ENCODE measurements at regions of chr3 and their contacts with region 1.

Region 1: GRCh38 chr3:58630076-58630709 is 36.4 kb downstream of the FAM3D start:
- DNase-seq: peak; percentile 88
- ATAC-seq: peak; percentile 89
- H3K4me3 Mint-ChIP-seq: no peak overlapping the region
- H3K27ac Mint-ChIP-seq: no peak overlapping the region
- H3K4me1 Mint-ChIP-seq: no peaks in the 10 kb centered on the region
- H3K27me3 Mint-ChIP-seq: peaks cover 28% of the 10 kb centered on the region
- CTCF ChIP-seq: peak; percentile 98

Region 2: DNA sequence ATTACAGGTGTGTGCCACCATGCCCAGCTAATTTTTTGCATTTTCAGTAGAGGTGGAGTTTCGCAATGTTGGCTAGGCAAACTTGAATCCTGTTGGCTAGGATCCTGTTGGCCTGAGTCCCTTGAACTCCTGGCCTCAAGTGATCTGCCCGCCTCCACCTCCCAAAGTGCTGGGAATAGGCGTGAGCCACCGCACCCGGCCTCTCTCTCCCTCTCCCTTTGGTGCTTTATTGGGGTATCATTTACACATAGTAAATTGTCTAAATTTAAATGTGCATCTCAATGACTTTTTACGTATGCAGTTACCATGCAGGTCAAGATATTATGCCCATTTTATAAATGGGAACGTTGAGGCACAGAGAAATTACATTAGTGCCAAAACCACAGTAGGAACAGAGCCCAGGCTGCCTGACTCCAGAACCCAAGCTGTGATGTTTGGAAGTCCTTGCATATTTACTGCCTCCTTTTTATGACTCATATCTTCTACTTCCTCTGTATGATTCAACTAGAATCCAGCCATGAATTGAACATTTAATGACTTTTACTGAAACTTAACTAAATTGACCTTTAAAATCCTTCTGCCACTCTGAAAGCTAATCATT is 358.2 kb before region 1 on chr3:
- CTCF ChIA-PET with region 1: no interaction called
- POLR2A ChIA-PET with region 1: no interaction called
- DNase-seq: no peak
- ATAC-seq: no peak
- H3K4me3 Mint-ChIP-seq: no peak overlapping the region
- H3K27ac Mint-ChIP-seq: no peak overlapping the region
- H3K4me1 Mint-ChIP-seq: no peaks in the 10 kb centered on the region
- H3K27me3 Mint-ChIP-seq: no peaks in the 10 kb centered on the region
- CTCF ChIP-seq: no peak

Region 3: GRCh38 chr3:58560771-58561311 is 69.4 kb before region 1 on chr3:
- CTCF ChIA-PET with region 1: interaction called, 223 read pairs
- POLR2A ChIA-PET with region 1: no interaction called
- DNase-seq: peak; percentile 79
- ATAC-seq: peak; percentile 87
- H3K4me3 Mint-ChIP-seq: no peak overlapping the region
- H3K27ac Mint-ChIP-seq: peak overlapping the region; percentile 94
- H3K4me1 Mint-ChIP-seq: peaks cover 47% of the 10 kb centered on the region
- H3K27me3 Mint-ChIP-seq: no peaks in the 10 kb centered on the region; the same call in 1 of the 2 replicates
- CTCF ChIP-seq: no peak

Region 4: DNA sequence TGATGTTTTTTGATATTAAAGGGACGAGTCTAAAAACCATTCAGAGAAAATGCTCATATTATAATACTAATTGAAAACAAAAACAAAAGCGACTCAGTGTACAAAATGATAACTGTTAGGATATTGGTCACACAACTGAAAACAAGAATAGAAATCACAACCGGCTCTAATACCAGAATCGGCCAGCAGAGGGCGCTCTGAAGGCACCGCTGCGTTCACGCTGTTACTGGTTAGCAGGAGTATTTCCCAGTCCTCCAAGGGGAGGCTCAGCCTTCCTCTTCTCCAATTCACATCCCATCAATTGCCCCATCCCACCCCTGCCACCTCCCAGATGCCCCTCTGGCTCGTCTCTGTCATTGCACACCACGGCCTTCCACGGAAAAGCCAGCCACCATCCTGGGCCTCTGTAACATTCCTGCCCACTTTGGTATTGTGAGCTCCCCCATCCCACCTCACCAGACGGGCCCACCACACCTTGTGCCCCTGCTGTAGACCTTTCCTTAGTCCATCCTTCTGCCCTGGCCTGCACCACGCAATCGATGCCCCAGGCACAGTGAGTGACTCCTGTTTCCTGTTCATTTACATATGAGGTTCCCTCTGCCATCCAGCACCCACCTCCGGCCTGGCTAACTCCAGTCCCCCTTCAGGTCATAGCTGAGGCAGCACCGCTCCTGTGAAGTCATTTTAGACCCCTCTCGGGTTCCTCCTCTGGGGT is 61.5 kb before region 1 on chr3:
- CTCF ChIA-PET with region 1: interaction called, 223 read pairs
- POLR2A ChIA-PET with region 1: no interaction called
- DNase-seq: peak; percentile 88
- ATAC-seq: peak; percentile 43
- H3K4me3 Mint-ChIP-seq: no peak overlapping the region
- H3K27ac Mint-ChIP-seq: no peak overlapping the region
- H3K4me1 Mint-ChIP-seq: peaks cover 35% of the 10 kb centered on the region
- H3K27me3 Mint-ChIP-seq: peaks cover 6% of the 10 kb centered on the region
- CTCF ChIP-seq: peak; percentile 97

Region 5: GRCh38 chr3:58585005-58585786 is 45.0 kb before region 1 on chr3:
- CTCF ChIA-PET with region 1: interaction called, 12 read pairs
- POLR2A ChIA-PET with region 1: no interaction called
- DNase-seq: peak; percentile 90
- ATAC-seq: peak; percentile 82
- H3K4me3 Mint-ChIP-seq: peak overlapping the region; percentile 63
- H3K27ac Mint-ChIP-seq: no peak overlapping the region
- H3K4me1 Mint-ChIP-seq: peaks cover 40% of the 10 kb centered on the region
- H3K27me3 Mint-ChIP-seq: peaks cover 47% of the 10 kb centered on the region
- CTCF ChIP-seq: peak; percentile 56

Region 6: DNA sequence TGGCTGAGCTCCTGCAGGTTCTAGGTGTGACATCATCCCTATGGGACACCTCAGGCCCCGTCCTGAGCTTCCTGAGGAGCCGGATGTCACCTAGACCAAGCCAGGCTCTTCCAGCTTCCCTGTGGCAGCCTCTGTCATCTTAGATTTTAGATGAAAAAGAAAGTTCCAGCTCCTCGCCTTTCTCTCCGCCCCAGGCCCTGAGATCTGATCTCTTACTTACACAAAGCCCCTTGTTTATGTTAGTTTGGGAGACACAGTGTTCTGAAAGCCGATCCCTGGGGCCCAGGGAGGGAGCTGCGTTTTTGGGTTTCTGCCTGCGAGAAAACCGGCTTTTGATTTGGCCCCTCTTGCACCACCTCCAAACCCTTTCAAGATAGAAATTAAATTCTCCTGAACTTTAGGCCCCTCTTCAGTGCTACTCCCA is 12.8 kb before region 1 on chr3:
- CTCF ChIA-PET with region 1: interaction called, 28 read pairs
- POLR2A ChIA-PET with region 1: no interaction called
- DNase-seq: no peak
- ATAC-seq: peak; percentile 24
- H3K4me3 Mint-ChIP-seq: no peak overlapping the region
- H3K27ac Mint-ChIP-seq: no peak overlapping the region
- H3K4me1 Mint-ChIP-seq: peaks cover 10% of the 10 kb centered on the region
- H3K27me3 Mint-ChIP-seq: no peaks in the 10 kb centered on the region
- CTCF ChIP-seq: no peak

Region 7: DNA sequence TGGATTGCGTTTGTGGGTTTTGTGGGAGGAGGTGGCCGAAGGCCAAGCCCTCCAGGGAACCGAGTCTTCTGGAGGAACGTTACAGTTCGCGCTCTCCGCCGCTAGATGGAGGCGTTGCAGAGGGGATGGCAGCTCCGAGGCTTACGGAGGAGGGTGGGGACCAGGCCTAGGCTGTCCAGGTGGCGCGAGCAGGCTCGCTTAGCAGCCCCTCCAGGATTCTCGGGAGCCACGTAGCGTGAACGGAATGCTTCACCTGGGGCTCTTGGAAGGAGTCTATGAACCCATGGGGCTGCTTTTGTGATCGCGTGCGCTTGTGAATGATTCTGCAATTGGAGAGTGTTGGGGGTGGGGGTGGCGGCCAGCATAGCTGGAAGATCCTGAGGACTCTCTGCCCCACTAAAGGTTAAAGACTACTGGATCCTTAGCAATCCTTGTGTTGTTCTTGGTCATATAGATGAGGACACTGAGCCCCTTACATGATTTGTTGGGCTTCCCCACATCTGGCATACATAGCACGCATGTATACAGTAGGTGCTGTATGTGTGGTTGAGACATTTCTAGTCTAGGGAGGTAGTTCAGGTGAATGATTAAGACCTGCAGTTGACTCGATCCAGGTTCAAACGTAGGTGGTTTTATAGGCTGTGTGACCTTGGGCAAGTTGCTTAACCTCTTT is 10.6 kb after region 1 on chr3:
- CTCF ChIA-PET with region 1: interaction called, 13 read pairs
- POLR2A ChIA-PET with region 1: no interaction called
- DNase-seq: peak; percentile 93
- ATAC-seq: peak; percentile 96
- H3K4me3 Mint-ChIP-seq: peak overlapping the region; percentile 40; the same call in 1 of the 2 replicates
- H3K27ac Mint-ChIP-seq: no peak overlapping the region
- H3K4me1 Mint-ChIP-seq: peaks cover 2% of the 10 kb centered on the region; the same call in 1 of the 2 replicates
- H3K27me3 Mint-ChIP-seq: peaks cover 62% of the 10 kb centered on the region
- CTCF ChIP-seq: peak; percentile 80